K562 (cell line): ENCODE measurements at regions of chr4 and their contacts with region 1.

Region 1: GRCh38 chr4:102064747-102065442 is 274.4 kb downstream of the BANK1 start:
- DNase-seq: no peak
- ATAC-seq: no peak
- H3K4me3 ChIP-seq: no peak overlapping the region
- H3K27ac ChIP-seq: no peak overlapping the region
- H3K4me1 ChIP-seq: no peaks in the 10 kb centered on the region
- H3K27me3 ChIP-seq: no peaks in the 10 kb centered on the region
- CTCF ChIP-seq: no peak
- EP300 ChIP-seq: no peak
- POLR2A ChIP-seq: no peak
- RAD21 ChIP-seq: no peak

Region 2: DNA sequence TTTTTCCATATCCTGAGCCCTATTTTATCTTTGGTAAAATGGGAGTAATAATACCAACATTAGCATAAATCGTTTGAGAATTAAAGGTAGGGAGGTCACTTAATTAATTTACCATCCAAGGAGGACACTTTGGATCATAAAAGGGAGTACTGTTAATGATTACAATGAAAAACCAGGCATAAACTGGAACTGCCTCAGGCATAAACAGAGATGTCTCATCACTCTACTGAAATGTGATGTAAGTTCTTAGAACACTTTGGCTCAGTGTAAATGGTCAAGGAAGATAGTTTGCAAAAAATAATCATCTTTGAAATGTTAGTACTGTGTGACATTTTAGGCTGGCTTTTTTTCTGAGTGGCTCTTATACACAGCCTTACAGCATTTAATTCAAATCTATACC is 11.7 kb after region 1 on chr4:
- CTCF ChIA-PET with region 1: no interaction called
- POLR2A ChIA-PET with region 1: no interaction called
- in situ Hi-C with region 1: no loop called
- intact Hi-C with region 1: no loop called
- DNase-seq: no peak
- ATAC-seq: no peak
- H3K4me3 ChIP-seq: no peak overlapping the region
- H3K27ac ChIP-seq: no peak overlapping the region
- H3K4me1 ChIP-seq: no peaks in the 10 kb centered on the region
- H3K27me3 ChIP-seq: no peaks in the 10 kb centered on the region
- CTCF ChIP-seq: no peak
- EP300 ChIP-seq: no peak
- POLR2A ChIP-seq: no peak
- RAD21 ChIP-seq: no peak

Region 3: GRCh38 chr4:102120846-102121245 is 56.0 kb after region 1 on chr4:
- CTCF ChIA-PET with region 1: no interaction called
- POLR2A ChIA-PET with region 1: no interaction called
- in situ Hi-C with region 1: no loop called
- intact Hi-C with region 1: loop called (anchors 2 kb)
- DNase-seq: no peak
- ATAC-seq: no peak
- H3K4me3 ChIP-seq: no peak overlapping the region
- H3K27ac ChIP-seq: no peak overlapping the region
- H3K4me1 ChIP-seq: no peaks in the 10 kb centered on the region
- H3K27me3 ChIP-seq: no peaks in the 10 kb centered on the region
- CTCF ChIP-seq: no peak
- EP300 ChIP-seq: no peak
- POLR2A ChIP-seq: no peak
- RAD21 ChIP-seq: no peak